ENCODE measurements at regions of chr17 and their contacts with region 1.

Region 1: DNA sequence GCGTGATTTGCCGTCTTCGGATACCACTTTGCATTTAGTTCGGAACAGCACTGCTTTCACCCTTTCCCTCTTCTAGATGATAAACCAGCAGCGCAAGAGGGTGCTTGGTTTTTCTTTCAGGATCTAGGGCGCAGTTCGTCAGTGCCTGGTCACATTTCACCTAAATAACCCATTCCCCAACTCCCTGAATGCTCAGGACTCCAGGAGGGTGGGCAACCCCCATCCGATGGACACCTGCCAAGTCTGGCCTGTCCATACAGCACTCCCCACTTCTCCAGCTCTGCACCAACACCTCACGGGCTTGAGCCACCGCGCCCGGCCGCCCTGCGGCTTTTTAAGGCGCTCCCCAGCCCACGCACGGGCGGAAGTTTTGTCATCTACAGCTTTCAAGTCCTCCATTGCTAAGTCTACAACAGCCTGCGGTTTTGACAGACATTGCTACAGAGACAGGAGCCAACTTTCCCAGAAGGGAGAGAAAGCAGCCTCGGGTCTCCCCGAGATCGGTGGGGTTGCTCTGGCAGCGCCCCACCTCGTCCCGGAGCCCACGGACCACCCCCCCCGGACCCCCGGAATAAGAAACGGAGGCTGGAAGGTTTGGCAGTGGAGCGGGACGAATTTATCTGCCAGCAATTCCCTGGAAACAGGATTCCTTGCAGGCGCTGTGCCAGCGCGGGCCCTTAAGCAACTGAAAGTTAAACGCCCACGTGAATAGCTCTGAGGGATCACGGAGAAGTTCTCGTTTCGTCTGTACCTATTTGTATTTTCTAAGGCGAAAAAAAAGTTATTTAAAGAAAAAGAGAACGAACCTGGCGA is 38.6 kb upstream of the SLFN13 start:
- DNase-seq: peak; percentile 75
- H3K4me3 Mint-ChIP-seq: peak overlapping the region; percentile 82
- H3K27ac Mint-ChIP-seq: peak overlapping the region; percentile 96
- H3K4me1 Mint-ChIP-seq: peaks cover 64% of the 10 kb centered on the region
- H3K27me3 Mint-ChIP-seq: no peaks in the 10 kb centered on the region

Region 2: DNA sequence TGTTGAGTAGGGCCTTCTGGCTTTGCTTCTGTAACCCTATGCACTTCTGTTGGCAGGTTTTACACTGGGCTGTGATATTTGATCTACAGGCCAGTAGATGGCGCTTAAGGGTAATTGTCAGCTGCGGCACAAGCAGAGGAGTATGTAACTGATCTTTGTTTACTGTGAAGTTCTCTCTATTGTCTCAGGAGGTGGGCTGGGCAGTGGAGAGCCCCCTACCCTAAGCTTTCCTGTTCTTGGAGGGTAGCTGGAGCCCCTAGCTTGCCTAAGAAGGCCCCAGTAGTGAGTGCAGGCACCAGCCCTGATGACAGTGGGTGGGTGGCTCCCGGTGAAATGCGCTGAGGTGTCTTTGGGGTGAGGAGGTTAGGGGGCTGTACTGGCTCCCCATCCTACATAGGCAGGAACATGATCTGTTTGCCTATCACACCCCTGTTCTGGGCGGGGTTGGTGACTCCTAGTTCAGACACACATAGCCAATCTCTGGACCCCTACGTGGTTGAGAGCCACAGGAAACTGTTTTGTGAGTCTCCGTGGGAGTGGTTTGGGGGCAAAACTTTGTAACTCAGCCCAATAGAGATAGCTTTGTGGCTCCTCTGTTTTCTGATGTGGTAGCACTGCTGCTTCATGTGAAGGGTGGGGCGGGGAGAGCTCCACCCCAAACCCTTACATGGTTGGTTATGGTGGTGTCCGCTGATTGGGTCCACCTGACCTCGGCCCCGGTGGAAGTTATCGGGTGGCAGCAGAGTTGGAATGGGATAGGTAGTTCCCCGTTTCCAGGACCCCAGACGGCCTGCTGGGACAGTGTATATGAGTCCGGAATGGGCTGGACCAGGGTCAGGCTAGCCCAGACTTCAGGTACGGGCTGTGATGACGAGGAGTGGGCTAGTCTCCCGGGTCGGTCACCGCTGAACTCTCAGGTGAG is 174.1 kb before region 1 on chr17:
- CTCF ChIA-PET with region 1: interaction called, 11 read pairs
- DNase-seq: peak; percentile 89
- H3K4me3 Mint-ChIP-seq: peak overlapping the region; percentile 82
- H3K27ac Mint-ChIP-seq: peak overlapping the region; percentile 95
- H3K4me1 Mint-ChIP-seq: peaks cover 43% of the 10 kb centered on the region
- H3K27me3 Mint-ChIP-seq: peaks cover 13% of the 10 kb centered on the region

Measured in activated naive CD4-positive, alpha-beta T cell treated with anti-CD3 and anti-CD28 coated beads, Interleukin-2, amount 10 ng/mL, durations not matched to agents 7 days and 5 days (primary cell).